ENCODE measurements at regions of chr4 and their contacts with region 1.

Region 1: GRCh38 chr4:119238068-119238722 is 25.7 kb downstream of the USP53 start:
- DNase-seq: no peak
- ATAC-seq: no peak
- H3K4me3 ChIP-seq: no peak overlapping the region
- H3K27ac ChIP-seq: no peak overlapping the region
- H3K4me1 ChIP-seq: peaks cover 2 to 13% of the 10 kb centered on the region in 2 donors
- H3K27me3 ChIP-seq: no peaks in the 10 kb centered on the region

Region 2: DNA sequence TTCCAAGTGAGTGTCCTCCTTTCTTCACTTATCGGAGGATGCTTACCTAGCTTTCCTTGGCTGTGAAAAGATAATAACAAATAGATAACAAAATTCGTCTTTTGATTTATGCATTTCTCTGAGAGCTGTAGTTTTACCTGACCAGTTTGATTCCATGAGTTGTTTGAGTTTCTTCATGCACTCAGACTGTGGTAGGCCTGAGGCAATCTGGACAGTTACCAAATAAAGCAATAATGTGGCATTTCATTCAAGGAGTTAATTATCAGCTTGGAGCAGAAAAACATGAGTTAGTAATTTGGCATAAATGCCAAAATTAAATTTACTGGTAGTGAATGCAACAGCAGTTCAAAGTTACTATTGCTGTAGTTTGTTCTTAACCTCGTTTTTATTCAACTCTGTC is 30.3 kb after region 1 on chr4:
- intact Hi-C with region 1: loop called in 1 of 2 experiments (anchors 5 kb)
- DNase-seq: no peak
- ATAC-seq: no peak
- H3K4me3 ChIP-seq: no peak overlapping the region
- H3K27ac ChIP-seq: no peak overlapping the region
- H3K4me1 ChIP-seq: no peaks in the 10 kb centered on the region
- H3K27me3 ChIP-seq: no peaks in the 10 kb centered on the region

Region 3: GRCh38 chr4:119286377-119287002 is 48.3 kb after region 1 on chr4:
- intact Hi-C with region 1: loop called in 1 of 2 experiments (anchors 5 kb)
- DNase-seq: no peak
- ATAC-seq: peak; percentile 79
- H3K4me3 ChIP-seq: no peak overlapping the region
- H3K27ac ChIP-seq: no peak overlapping the region
- H3K4me1 ChIP-seq: peaks cover 0 to 5% of the 10 kb centered on the region in 2 donors
- H3K27me3 ChIP-seq: no peaks in the 10 kb centered on the region

Measured in aorta (tissue), 5 donors.